GM23248 (cell line): ENCODE measurements at regions of chr14 and their contacts with region 1.

Region 1: DNA sequence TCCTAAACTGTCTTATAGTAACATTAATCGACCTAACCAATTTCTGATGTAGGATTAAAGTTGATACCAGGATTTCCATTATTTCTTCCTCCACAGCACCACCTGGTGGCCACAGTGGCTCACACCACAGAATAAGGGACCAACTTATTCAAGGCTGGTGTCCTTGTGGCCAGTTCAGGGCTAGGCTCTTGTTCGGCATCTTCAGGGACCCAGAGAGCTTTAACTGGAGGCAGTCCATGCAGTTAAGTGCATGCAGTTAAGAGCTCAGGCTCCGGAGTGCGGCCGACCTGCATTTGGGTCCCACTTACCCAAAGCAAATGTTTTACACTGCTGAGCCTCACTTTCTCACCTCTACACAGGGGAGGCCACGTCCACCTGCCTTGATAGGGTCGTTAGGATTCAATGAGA is 42.0 kb upstream of the GPR68 start:
- DNase-seq: peak; percentile 78
- H3K4me3 ChIP-seq: no peak overlapping the region
- H3K27ac ChIP-seq: no peak overlapping the region
- H3K4me1 ChIP-seq: peaks cover 24% of the 10 kb centered on the region
- H3K27me3 ChIP-seq: no peaks in the 10 kb centered on the region; the same call in 1 of the 2 replicates

Region 2: DNA sequence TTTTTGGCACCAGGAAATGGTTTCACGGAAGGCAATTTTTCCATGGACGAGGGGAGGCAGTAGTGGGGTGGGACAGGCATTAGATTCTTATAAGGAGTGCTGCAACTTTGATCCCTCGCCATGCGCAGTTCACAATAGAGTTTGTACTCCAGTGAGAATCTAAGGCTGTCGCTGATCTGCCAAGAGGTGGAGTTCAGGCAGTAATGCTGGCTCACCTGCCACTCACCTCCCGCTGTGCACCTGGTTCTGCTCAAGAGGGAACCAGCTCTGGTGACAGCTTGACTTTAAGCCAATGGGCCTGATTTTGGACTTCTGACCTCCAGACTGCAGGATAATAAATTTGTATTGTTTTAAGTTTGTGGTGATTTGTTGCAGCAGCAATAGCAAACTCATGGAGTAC is 389.5 kb before region 1 on chr14:
- in situ Hi-C with region 1: loop called (anchors 5 kb)
- DNase-seq: no peak
- H3K4me3 ChIP-seq: no peak overlapping the region
- H3K27ac ChIP-seq: no peak overlapping the region
- H3K4me1 ChIP-seq: no peaks in the 10 kb centered on the region
- H3K27me3 ChIP-seq: no peaks in the 10 kb centered on the region

Region 3: DNA sequence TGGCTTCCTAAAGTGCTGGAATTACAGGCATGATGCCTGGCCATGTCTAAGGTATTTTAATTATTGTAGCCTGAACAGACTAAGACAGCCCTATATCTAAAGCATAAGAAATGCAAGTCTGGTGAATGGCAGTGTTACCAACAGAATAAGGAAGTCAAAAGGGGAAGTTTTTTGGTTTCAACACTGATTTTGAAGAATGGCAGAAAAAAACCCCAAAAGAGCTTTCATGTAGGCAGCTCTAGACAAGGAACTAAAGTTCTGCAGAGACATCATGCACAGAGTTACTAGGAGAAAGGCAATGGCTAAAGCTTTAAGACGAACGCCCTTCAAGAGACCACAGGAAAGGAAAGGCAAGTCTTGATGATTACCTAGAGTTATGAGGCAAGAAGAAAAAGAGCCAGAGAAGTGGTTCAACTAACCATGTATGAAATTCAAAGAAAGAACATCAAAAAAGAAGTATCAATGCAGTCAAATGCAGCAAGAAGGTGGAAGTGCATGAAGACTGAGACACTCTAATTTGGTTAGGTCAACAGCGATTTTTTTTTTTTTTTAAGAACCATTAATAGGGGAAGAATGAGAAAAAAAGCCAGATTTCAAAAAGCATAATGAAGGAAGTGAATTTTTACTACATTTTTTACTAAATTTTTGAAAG is 276.9 kb before region 1 on chr14:
- in situ Hi-C with region 1: no loop called
- DNase-seq: no peak
- H3K4me3 ChIP-seq: no peak overlapping the region
- H3K27ac ChIP-seq: no peak overlapping the region
- H3K4me1 ChIP-seq: no peaks in the 10 kb centered on the region
- H3K27me3 ChIP-seq: no peaks in the 10 kb centered on the region

Region 4: DNA sequence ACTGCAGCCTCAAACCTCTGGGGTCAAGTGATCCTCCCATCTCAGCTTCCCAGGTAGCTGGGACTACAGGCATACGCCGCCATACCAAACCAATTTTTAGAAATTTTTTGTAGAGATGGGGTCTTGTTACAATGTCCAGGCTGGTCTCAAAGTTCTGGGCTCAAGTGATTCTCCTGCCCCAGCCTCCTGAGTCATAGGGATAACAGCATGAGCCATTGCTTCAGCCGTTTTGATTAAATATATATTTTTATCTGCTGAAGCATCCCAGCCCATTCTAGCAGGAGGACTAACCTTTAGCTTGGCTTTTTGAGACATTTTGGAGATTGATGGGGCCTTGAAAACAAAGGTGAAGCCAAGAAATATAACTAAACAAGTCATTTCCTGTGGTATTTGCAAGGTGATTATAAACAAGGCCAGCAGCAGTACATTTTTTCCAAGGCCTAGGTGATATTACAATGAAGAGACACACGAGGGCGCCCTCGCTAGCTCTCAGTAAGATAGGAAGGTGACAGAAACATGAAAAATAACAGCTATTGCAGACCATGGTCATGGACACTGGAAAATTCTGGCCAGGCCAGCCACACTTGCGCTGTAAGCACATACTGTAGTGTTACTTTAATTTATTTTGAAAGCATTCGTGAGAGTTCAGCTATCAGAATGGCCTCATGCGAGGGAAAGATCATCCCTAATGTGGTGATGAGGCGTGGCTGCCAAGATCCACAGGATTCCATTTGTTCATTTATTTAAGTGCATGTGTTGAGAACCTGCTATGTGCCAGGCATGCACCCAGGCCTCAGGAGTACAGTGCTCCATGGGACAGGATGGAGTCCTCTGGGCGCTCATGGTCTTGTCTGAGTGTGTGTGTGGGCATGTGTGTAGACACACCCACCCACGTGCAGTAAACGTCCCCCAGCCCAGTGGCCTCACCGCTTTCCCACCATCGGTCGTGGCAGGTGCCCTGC is 109.2 kb before region 1 on chr14:
- in situ Hi-C with region 1: loop called (anchors 5 kb)
- DNase-seq: peak; percentile 81
- H3K4me3 ChIP-seq: no peak overlapping the region
- H3K27ac ChIP-seq: no peak overlapping the region
- H3K4me1 ChIP-seq: no peaks in the 10 kb centered on the region
- H3K27me3 ChIP-seq: no peaks in the 10 kb centered on the region